Activated T-helper 2 cell treated with anti-CD3 and anti-CD28 coated beads, Interferon-gamma antibody, Interleukin-2, Interleukin-4, amounts not matched to agents 10 μg/mL and 5 μg/mL and 100 μg/mL, durations not matched to agents 14 hours and 24 hours and 36 hours (primary cell): ENCODE measurements at regions of chr9 and their contacts with region 1.

Region 1: GRCh38 chr9:72364679-72365524 is at the start of gene ZFAND5:
- DNase-seq: peak; percentile 86
- H3K4me3 Mint-ChIP-seq: peak within 1 kb of the TSS; percentile 90
- H3K27ac Mint-ChIP-seq: peak within 1 kb of the TSS; percentile 92
- H3K4me1 Mint-ChIP-seq: peaks cover 29% of the 10 kb centered on the region
- H3K27me3 Mint-ChIP-seq: no peaks in the 10 kb centered on the region
- total RNA-seq, gene ZFAND5: 95.5 and 99.1 TPM in 2 replicates

Region 2: DNA sequence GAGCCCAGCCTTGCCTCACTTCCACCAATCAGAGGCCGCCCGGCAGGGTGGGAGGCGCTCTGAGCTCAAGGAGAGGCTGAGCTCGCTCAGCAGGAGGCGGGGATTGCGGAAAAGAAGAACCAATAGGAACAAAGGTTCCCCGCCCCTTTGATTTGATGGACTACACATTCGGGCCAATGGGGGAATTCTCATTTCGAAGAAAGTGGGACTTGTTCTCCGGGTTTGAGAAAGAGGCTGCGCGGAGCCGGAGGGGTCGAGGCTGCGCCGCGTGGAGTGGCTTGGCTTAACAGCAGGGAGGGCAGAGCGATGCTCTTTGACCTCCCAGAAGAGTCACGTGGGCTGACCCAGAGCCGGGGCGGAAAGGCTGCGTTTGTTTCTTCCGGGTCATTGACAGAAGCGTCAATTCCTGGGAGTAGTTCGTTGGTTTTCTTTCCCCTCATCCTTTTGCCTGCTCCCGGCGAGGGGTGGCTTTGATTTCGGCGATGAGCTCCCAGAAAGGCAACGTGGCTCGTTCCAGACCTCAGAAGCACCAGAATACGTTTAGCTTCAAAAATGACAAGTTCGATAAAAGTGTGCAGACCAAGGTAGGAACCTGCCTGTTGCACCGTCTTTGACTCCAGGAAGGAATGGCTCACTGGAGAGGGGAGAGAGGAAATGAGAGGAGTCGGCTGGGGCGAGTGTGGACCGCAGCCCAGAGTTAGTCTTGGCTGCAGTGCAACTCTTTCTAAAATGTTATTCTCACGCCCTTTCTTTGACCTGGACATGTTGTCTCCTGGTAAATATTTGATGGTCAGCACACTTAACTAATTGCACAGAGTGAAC is 453.4 kb before region 1 on chr9 and contains the start of gene C9orf85:
- intact Hi-C with region 1: loop called (anchors 1 kb)
- DNase-seq: peak; percentile 97
- H3K4me3 Mint-ChIP-seq: peak within 1 kb of the TSS; percentile 100
- H3K27ac Mint-ChIP-seq: peak within 1 kb of the TSS; percentile 99
- H3K4me1 Mint-ChIP-seq: peaks cover 43% of the 10 kb centered on the region
- H3K27me3 Mint-ChIP-seq: no peaks in the 10 kb centered on the region
- total RNA-seq, gene C9orf85: 8.3 and 9.8 TPM in 2 replicates

Region 3: DNA sequence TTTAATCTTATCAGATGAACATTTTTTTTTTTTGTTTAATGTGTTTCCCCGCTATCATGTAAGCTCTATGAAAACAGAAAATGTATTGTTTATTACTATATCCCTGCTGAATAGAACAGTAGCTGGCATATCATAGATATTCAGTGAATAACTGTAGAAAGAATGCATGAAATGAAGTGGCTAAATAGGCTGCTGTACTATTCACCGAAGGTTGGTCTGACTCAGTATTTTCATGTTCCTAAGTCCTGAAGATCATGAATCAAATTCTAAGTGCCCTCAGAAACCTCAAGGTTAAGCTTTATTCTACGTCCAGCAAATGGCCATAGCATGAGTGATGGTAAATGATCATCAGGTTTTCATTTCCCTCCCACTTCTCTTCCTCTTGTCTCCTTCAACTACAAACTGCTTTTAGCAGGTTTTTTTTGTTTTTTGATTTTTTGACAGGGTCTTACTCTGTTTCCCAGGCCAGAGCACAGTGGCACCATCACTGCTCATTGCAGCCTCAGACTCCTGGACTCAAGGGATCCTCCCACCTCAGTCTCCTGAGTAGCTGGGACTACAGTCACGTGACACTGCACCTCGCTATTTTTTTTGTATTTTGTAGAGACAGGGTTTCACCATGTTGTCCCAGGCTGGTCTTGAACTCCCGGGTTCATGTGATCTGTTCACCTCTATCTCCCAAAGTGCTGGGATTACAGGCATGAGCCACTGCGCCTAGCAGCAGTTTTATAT is 19.2 kb after region 1 on chr9:
- intact Hi-C with region 1: loop called (anchors 2 kb)
- DNase-seq: no peak
- H3K4me3 Mint-ChIP-seq: no peak overlapping the region
- H3K27ac Mint-ChIP-seq: no peak overlapping the region
- H3K4me1 Mint-ChIP-seq: peaks cover 7% of the 10 kb centered on the region
- H3K27me3 Mint-ChIP-seq: peaks cover 4% of the 10 kb centered on the region

Region 4: GRCh38 chr9:72473474-72474261 is 108.8 kb after region 1 on chr9:
- intact Hi-C with region 1: loop called (anchors 10 kb)
- DNase-seq: no peak
- H3K4me3 Mint-ChIP-seq: no peak overlapping the region
- H3K27ac Mint-ChIP-seq: peak overlapping the region; percentile 77
- H3K4me1 Mint-ChIP-seq: peaks cover 33% of the 10 kb centered on the region
- H3K27me3 Mint-ChIP-seq: no peaks in the 10 kb centered on the region

Region 5: DNA sequence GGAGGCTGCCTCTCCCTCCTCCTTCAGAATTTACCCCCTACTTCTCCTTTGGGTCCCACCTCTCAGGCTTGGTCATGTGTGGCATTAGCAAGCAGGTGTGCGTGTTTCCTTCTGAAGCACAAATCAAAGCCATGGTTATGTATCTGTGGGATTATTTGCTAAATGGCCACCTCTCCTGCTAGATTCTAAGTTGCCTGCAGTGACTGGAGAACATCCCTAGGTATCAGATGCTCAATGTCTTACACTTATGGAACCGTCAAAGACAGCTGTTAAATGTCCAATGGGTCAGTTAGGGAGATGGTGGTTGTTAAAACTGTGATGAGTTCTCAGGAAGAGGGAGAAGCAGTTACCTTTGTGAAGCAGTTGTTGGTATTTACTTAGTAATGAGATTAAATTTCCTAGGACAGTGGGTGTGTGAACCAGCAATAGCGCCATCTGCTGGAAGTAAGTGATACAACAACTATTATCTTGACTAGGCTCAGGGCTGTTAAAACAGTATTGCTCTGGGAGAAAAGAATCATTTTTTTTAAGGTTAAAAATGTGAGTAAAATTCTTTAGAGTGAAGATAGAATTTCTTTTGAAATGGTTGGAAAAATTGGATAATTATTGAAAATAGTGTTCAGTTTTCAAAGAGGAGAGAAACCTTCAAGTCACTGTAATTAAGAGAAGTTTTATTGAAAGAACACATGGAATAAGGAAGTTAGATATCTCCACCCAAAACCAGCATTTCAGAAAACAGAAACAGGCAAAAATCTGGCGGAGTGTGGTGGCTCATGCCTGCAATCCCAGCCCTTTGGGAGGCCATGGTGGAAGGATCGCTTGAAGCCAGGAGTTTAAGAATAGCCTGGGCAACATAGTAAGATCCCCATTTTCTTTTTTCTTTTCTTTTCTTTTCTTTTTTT is 227.9 kb after region 1 on chr9:
- intact Hi-C with region 1: loop called (anchors 2 kb)
- DNase-seq: no peak
- H3K4me3 Mint-ChIP-seq: no peak overlapping the region
- H3K27ac Mint-ChIP-seq: no peak overlapping the region
- H3K4me1 Mint-ChIP-seq: peaks cover 50% of the 10 kb centered on the region
- H3K27me3 Mint-ChIP-seq: peaks cover 8% of the 10 kb centered on the region

Region 6: DNA sequence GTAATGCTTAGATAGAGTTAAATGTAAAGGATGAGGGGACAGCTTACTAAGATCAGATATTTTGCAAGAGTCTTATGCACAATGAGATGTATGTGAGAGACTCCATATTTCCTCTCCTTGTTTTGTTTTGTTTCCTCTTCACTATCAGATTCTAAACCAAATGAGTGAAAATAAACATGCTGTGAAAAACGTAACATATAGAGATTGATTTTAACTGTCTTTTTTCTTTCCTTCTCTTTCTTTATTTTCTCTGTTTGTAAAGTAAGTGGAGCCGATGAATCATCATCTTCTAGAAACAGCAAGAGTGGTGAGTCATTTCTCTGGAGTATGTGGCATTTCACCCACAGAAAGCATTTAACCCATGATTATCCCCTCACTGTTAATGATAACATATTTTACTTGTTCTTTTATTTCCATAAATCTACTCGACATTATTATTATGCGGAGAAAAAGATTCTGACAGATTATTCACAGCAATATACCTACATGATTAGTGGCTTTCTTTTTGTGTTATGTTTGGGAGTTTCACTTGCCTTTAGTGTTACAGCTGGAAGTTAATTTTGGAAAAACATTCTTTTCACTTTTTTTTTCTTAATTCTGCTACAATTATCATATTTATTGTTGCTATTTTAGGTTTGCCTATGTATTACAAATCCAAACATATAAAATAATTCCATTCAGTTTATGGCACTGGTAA is 784.6 kb after region 1 on chr9:
- intact Hi-C with region 1: loop called (anchors 5 kb)
- DNase-seq: no peak
- H3K4me3 Mint-ChIP-seq: peak overlapping the region; percentile 20
- H3K27ac Mint-ChIP-seq: peak overlapping the region; percentile 76
- H3K4me1 Mint-ChIP-seq: peaks cover 63% of the 10 kb centered on the region
- H3K27me3 Mint-ChIP-seq: no peaks in the 10 kb centered on the region